GM12878 (cell line): ENCODE measurements at regions of chr9 and their contacts with region 1.

Region 1: DNA sequence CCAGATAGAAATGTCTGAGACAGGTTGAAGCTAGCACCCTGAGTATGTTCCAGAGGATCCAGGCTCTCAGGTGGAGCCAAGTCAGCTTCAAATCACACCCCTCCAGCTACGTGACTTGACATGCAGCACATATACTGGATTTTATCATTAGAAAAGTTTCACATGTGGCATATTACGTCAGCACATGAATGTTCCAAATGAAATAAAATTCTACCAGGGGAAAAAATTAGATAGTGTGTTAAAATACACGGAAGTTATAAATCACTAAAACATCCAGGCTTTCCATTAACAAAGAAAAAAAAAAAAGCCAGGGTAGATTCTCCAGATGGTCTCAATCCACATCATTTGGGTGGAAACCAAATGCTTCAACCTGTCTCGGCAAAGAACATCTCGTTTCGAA is 251.6 kb downstream of the MPDZ start:
- DNase-seq: no peak
- ATAC-seq: no peak
- H3K4me3 ChIP-seq: no peak overlapping the region
- H3K27ac ChIP-seq: no peak overlapping the region
- H3K4me1 ChIP-seq: no peaks in the 10 kb centered on the region
- H3K27me3 ChIP-seq: no peaks in the 10 kb centered on the region
- CTCF ChIP-seq: no peak
- EP300 ChIP-seq: no peak
- POLR2A ChIP-seq: no peak
- RAD21 ChIP-seq: no peak

Region 2: GRCh38 chr9:13064690-13065075 is 36.8 kb after region 1 on chr9:
- CTCF ChIA-PET with region 1: interaction called, 3 read pairs
- POLR2A ChIA-PET with region 1: no interaction called
- RAD21 ChIA-PET with region 1: no interaction called
- SMC1A ChIA-PET with region 1: interaction called, 3 read pairs
- in situ Hi-C with region 1: loop called (anchors 5 kb)
- intact Hi-C with region 1: no loop called
- DNase-seq: no peak
- ATAC-seq: no peak
- H3K4me3 ChIP-seq: no peak overlapping the region
- H3K27ac ChIP-seq: no peak overlapping the region
- H3K4me1 ChIP-seq: no peaks in the 10 kb centered on the region
- H3K27me3 ChIP-seq: no peaks in the 10 kb centered on the region
- CTCF ChIP-seq: no peak
- EP300 ChIP-seq: no peak
- POLR2A ChIP-seq: no peak
- RAD21 ChIP-seq: no peak

Region 3: DNA sequence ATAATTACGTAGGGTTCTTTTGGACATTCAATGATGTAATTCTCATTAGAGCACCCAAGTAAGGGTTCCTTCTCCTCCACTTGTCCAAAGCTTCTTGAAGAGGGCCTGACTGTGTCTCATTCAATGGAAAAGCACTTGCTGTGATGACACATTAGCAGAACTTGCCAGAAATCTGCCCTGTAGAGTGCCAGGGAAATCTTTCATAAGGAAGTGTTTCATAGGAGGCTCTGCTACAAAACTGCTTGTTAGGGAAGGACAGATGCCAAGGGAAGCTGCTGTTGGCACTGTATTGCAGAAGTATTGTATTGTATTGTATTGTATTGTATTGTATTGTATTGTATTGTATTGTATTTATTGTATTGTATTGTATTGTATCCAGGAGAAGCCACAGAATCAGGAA is 297.1 kb after region 1 on chr9:
- CTCF ChIA-PET with region 1: no interaction called
- POLR2A ChIA-PET with region 1: no interaction called
- RAD21 ChIA-PET with region 1: no interaction called
- SMC1A ChIA-PET with region 1: no interaction called
- in situ Hi-C with region 1: no loop called
- intact Hi-C with region 1: no loop called
- DNase-seq: no peak
- ATAC-seq: no peak
- H3K4me3 ChIP-seq: no peak overlapping the region
- H3K27ac ChIP-seq: no peak overlapping the region
- H3K4me1 ChIP-seq: no peaks in the 10 kb centered on the region
- H3K27me3 ChIP-seq: no peaks in the 10 kb centered on the region
- CTCF ChIP-seq: no peak
- EP300 ChIP-seq: no peak
- POLR2A ChIP-seq: no peak
- RAD21 ChIP-seq: no peak

Region 4: GRCh38 chr9:13467157-13467556 is 439.3 kb after region 1 on chr9:
- CTCF ChIA-PET with region 1: no interaction called
- POLR2A ChIA-PET with region 1: no interaction called
- RAD21 ChIA-PET with region 1: no interaction called
- SMC1A ChIA-PET with region 1: no interaction called
- in situ Hi-C with region 1: no loop called
- intact Hi-C with region 1: no loop called
- DNase-seq: no peak
- ATAC-seq: no peak
- H3K4me3 ChIP-seq: no peak overlapping the region
- H3K27ac ChIP-seq: no peak overlapping the region
- H3K4me1 ChIP-seq: no peaks in the 10 kb centered on the region
- H3K27me3 ChIP-seq: no peaks in the 10 kb centered on the region
- CTCF ChIP-seq: no peak
- EP300 ChIP-seq: no peak
- POLR2A ChIP-seq: no peak
- RAD21 ChIP-seq: no peak